Panc1 (cell line): ENCODE measurements at regions of chr15 and their contacts with region 1.

Region 1: GRCh38 chr15:78872972-78873792 is 492 bp downstream of the MORF4L1 start:
- DNase-seq: peak; percentile 67
- ATAC-seq: peak; percentile 79
- H3K4me3 ChIP-seq: peak overlapping the region; percentile 90 to 97
- H3K27ac ChIP-seq: peak overlapping the region; percentile 96
- H3K4me1 ChIP-seq: peaks cover 14% of the 10 kb centered on the region
- H3K27me3 ChIP-seq: no peaks in the 10 kb centered on the region
- CTCF ChIP-seq: no peak; the same call in 1 of the 2 replicates

Region 2: DNA sequence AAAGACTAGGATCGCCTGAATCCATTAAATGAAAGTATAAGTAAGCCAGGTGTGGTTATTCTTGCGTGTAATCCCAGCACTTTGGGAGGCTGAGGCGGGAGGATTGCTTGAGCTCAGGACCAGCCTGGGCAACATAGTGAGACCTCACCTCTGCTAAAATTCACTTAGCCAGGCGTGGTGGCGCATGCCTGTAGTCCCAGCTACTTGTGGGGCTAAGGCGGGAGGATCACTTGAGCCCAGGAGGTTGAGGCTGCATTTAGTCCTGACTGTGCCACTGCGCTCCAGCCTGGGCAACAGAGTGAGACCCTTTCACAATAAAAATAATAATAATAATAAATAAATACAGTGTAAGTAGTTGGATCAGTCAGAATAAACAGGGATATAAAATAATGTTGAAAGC is 391.3 kb before region 1 on chr15:
- CTCF ChIA-PET with region 1: no interaction called
- POLR2A ChIA-PET with region 1: interaction called, 12 read pairs
- in situ Hi-C with region 1: no loop called
- intact Hi-C with region 1: no loop called
- DNase-seq: no peak
- ATAC-seq: peak; percentile 27; the same call in 1 of the 2 replicates
- H3K4me3 ChIP-seq: no peak overlapping the region
- H3K27ac ChIP-seq: peak overlapping the region; percentile 29; the same call in 1 of the 2 replicates
- H3K4me1 ChIP-seq: no peaks in the 10 kb centered on the region
- H3K27me3 ChIP-seq: no peaks in the 10 kb centered on the region
- CTCF ChIP-seq: no peak

Region 3: GRCh38 chr15:78750566-78750965 is 122.6 kb before region 1 on chr15:
- CTCF ChIA-PET with region 1: no interaction called
- POLR2A ChIA-PET with region 1: no interaction called
- in situ Hi-C with region 1: no loop called
- intact Hi-C with region 1: loop called (anchors 10 kb)
- DNase-seq: no peak
- ATAC-seq: peak; percentile 19; the same call in 1 of the 2 replicates
- H3K4me3 ChIP-seq: peak overlapping the region; percentile 13 to 39; a peak in 3 of 4 replicates
- H3K27ac ChIP-seq: no peak overlapping the region
- H3K4me1 ChIP-seq: no peaks in the 10 kb centered on the region
- H3K27me3 ChIP-seq: no peaks in the 10 kb centered on the region
- CTCF ChIP-seq: no peak

Region 4: GRCh38 chr15:78768531-78769408 is 104.4 kb before region 1 on chr15:
- CTCF ChIA-PET with region 1: no interaction called
- POLR2A ChIA-PET with region 1: interaction called, 13 read pairs
- in situ Hi-C with region 1: no loop called
- intact Hi-C with region 1: no loop called
- DNase-seq: no peak
- ATAC-seq: no peak
- H3K4me3 ChIP-seq: no peak overlapping the region
- H3K27ac ChIP-seq: no peak overlapping the region
- H3K4me1 ChIP-seq: no peaks in the 10 kb centered on the region
- H3K27me3 ChIP-seq: no peaks in the 10 kb centered on the region
- CTCF ChIP-seq: no peak

Region 5: DNA sequence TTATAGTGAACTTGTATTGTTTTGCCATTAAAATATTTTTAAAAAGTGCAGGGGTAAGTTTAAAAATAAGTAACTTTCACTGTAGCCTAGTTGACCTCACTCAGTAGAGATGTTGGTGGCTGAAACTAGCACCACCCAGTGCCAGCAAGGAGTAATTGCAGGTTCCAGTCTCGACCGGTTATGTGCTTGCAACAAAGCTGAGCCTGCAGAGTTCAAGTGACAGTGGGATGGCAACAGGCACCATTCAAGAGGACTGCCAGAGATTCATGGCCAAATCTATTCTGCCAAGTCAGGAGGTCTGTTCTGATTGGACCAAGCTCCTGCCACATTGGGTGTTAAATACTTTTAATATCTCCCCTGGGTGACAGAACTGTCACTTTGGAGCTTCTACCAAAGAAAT is 64.6 kb before region 1 on chr15:
- CTCF ChIA-PET with region 1: no interaction called
- POLR2A ChIA-PET with region 1: no interaction called
- in situ Hi-C with region 1: no loop called
- intact Hi-C with region 1: no loop called
- DNase-seq: peak; percentile 20
- ATAC-seq: peak; percentile 54; the same call in 1 of the 2 replicates
- H3K4me3 ChIP-seq: no peak overlapping the region
- H3K27ac ChIP-seq: no peak overlapping the region
- H3K4me1 ChIP-seq: peaks cover 4% of the 10 kb centered on the region; the same call in 1 of the 2 replicates
- H3K27me3 ChIP-seq: peaks cover 3% of the 10 kb centered on the region
- CTCF ChIP-seq: peak; percentile 91

Region 6: GRCh38 chr15:78850941-78851755 is 22.0 kb before region 1 on chr15:
- CTCF ChIA-PET with region 1: no interaction called
- POLR2A ChIA-PET with region 1: no interaction called
- in situ Hi-C with region 1: no loop called
- intact Hi-C with region 1: no loop called
- DNase-seq: no peak
- ATAC-seq: no peak
- H3K4me3 ChIP-seq: no peak overlapping the region
- H3K27ac ChIP-seq: no peak overlapping the region
- H3K4me1 ChIP-seq: no peaks in the 10 kb centered on the region
- H3K27me3 ChIP-seq: no peaks in the 10 kb centered on the region
- CTCF ChIP-seq: no peak